ENCODE measurements at regions of chr6 and their contacts with region 1.

Region 1: GRCh38 chr6:111210194-111210728 is 123.0 kb downstream of the SLC16A10 start:
- DNase-seq: peak; percentile 57
- H3K4me3 ChIP-seq: no peak overlapping the region
- H3K27ac ChIP-seq: no peak overlapping the region
- H3K4me1 ChIP-seq: no peaks in the 10 kb centered on the region
- H3K27me3 ChIP-seq: no peaks in the 10 kb centered on the region
- CTCF ChIP-seq: peak; percentile 71 to 80

Region 2: GRCh38 chr6:111011360-111012142 is 198.7 kb before region 1 on chr6:
- CTCF ChIA-PET with region 1: interaction called, 8 read pairs
- dilution Hi-C with region 1: no loop called
- in situ Hi-C with region 1: no loop called
- intact Hi-C with region 1: loop called (anchors 1 kb)
- DNase-seq: peak; percentile 33
- H3K4me3 ChIP-seq: no peak overlapping the region
- H3K27ac ChIP-seq: no peak overlapping the region
- H3K4me1 ChIP-seq: no peaks in the 10 kb centered on the region
- H3K27me3 ChIP-seq: no peaks in the 10 kb centered on the region
- CTCF ChIP-seq: peak; percentile 59 to 63

Region 3: GRCh38 chr6:111057074-111057752 is 153.0 kb before region 1 on chr6:
- CTCF ChIA-PET with region 1: no interaction called
- dilution Hi-C with region 1: no loop called
- in situ Hi-C with region 1: loop called (anchors 5 to 10 kb)
- intact Hi-C with region 1: loop called (anchors 1 kb)
- DNase-seq: peak; percentile 37
- H3K4me3 ChIP-seq: no peak overlapping the region
- H3K27ac ChIP-seq: no peak overlapping the region
- H3K4me1 ChIP-seq: no peaks in the 10 kb centered on the region
- H3K27me3 ChIP-seq: peaks cover 1% of the 10 kb centered on the region
- CTCF ChIP-seq: peak; percentile 75 to 80

Measured in mammary epithelial cell (primary cell).